ENCODE measurements at regions of chr11 and their contacts with region 1.

Region 1: GRCh38 chr11:7571640-7572000 is 57.8 kb downstream of the PPFIBP2 start:
- DNase-seq: peak; percentile 70
- H3K4me3 ChIP-seq: no peak overlapping the region; a peak in 1 of 4 replicates
- H3K27ac ChIP-seq: no peak overlapping the region; a peak in 1 of 4 replicates
- H3K4me1 ChIP-seq: peaks cover 0 to 23% of the 10 kb centered on the region in 2 experiments; a peak in 1 of 4 replicates
- H3K27me3 ChIP-seq: peaks cover 4% of the 10 kb centered on the region; the same call in 1 of the 2 replicates
- CTCF ChIP-seq: peak; percentile 95
- EP300 ChIP-seq: no peak
- RAD21 ChIP-seq: peak; percentile 96

Region 2: GRCh38 chr11:7435176-7435575 is 136.4 kb before region 1 on chr11:
- CTCF ChIA-PET with region 1: no interaction called
- POLR2A ChIA-PET with region 1: no interaction called
- DNase-seq: no peak
- H3K4me3 ChIP-seq: no peak overlapping the region
- H3K27ac ChIP-seq: no peak overlapping the region
- H3K4me1 ChIP-seq: no peaks in the 10 kb centered on the region
- H3K27me3 ChIP-seq: no peaks in the 10 kb centered on the region
- CTCF ChIP-seq: no peak
- EP300 ChIP-seq: no peak
- RAD21 ChIP-seq: no peak

Region 3: GRCh38 chr11:7520981-7521487 is 50.6 kb before region 1 on chr11:
- CTCF ChIA-PET with region 1: interaction called, 15 read pairs
- POLR2A ChIA-PET with region 1: no interaction called
- DNase-seq: no peak
- H3K4me3 ChIP-seq: no peak overlapping the region
- H3K27ac ChIP-seq: no peak overlapping the region
- H3K4me1 ChIP-seq: no peaks in the 10 kb centered on the region
- H3K27me3 ChIP-seq: peaks cover 5% of the 10 kb centered on the region; the same call in 1 of the 2 replicates
- CTCF ChIP-seq: no peak
- EP300 ChIP-seq: no peak
- RAD21 ChIP-seq: no peak

Region 4: GRCh38 chr11:7548659-7549274 is 22.9 kb before region 1 on chr11:
- CTCF ChIA-PET with region 1: interaction called, 35 read pairs
- POLR2A ChIA-PET with region 1: no interaction called
- DNase-seq: no peak
- H3K4me3 ChIP-seq: no peak overlapping the region
- H3K27ac ChIP-seq: no peak overlapping the region
- H3K4me1 ChIP-seq: peaks cover 0 to 4% of the 10 kb centered on the region in 2 experiments; a peak in 1 of 4 replicates
- H3K27me3 ChIP-seq: no peaks in the 10 kb centered on the region; the same call in 1 of the 2 replicates
- CTCF ChIP-seq: peak; percentile 14; the same call in 1 of the 2 replicates
- EP300 ChIP-seq: no peak
- RAD21 ChIP-seq: no peak

Region 5: GRCh38 chr11:7605186-7605943 is 33.7 kb after region 1 on chr11:
- CTCF ChIA-PET with region 1: interaction called, 14 read pairs
- POLR2A ChIA-PET with region 1: no interaction called
- DNase-seq: no peak
- H3K4me3 ChIP-seq: no peak overlapping the region
- H3K27ac ChIP-seq: no peak overlapping the region
- H3K4me1 ChIP-seq: peaks cover 0 to 1% of the 10 kb centered on the region in 2 experiments; a peak in 1 of 4 replicates
- H3K27me3 ChIP-seq: no peaks in the 10 kb centered on the region
- CTCF ChIP-seq: no peak
- EP300 ChIP-seq: no peak
- RAD21 ChIP-seq: no peak

Region 6: DNA sequence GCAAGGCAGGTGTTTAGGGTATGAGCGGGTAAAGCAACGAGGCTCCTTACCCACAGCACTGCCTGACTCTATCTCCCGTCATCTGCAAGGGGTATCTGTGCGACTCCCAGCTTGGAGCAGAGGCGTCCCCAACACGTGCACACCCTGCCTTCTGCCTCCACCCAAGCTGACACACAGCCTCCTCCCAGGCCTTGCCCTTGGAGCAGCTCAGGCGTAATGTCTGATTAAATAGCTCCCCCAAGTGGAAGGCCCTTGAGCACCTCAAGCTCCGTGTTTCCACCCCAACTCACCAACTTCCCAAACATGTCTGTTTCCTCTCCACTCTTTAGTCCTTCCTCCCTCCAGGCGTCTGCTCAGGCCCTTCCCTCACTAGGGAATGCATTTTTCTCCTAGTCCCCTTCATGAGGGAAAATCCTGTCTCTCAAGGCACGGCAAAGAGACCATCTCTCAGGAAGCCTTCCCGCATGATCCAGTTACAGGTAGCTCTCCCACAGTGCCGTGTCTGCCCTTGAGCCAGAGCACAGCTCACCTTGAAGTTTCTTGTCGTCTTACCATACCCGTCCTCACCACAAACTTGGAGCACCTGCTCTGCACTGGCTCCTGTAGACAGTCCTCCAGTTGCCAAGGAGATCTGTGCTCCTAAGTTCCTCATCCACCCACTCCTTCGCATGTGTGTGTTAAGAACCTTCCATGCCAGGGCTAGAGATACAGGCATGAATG is 85.8 kb after region 1 on chr11:
- CTCF ChIA-PET with region 1: interaction called, 359 read pairs
- POLR2A ChIA-PET with region 1: interaction called, 4 read pairs
- DNase-seq: peak; percentile 68
- H3K4me3 ChIP-seq: no peak overlapping the region
- H3K27ac ChIP-seq: no peak overlapping the region
- H3K4me1 ChIP-seq: peaks cover 0 to 40% of the 10 kb centered on the region in 2 experiments; a peak in 1 of 4 replicates
- H3K27me3 ChIP-seq: no peaks in the 10 kb centered on the region
- CTCF ChIP-seq: peak; percentile 56
- EP300 ChIP-seq: no peak
- RAD21 ChIP-seq: peak; percentile 86

Region 7: GRCh38 chr11:7688238-7688826 is 116.7 kb after region 1 on chr11:
- CTCF ChIA-PET with region 1: interaction called, 71 read pairs
- POLR2A ChIA-PET with region 1: no interaction called
- DNase-seq: peak; percentile 52
- H3K4me3 ChIP-seq: no peak overlapping the region; a peak in 1 of 4 replicates
- H3K27ac ChIP-seq: no peak overlapping the region
- H3K4me1 ChIP-seq: no peaks in the 10 kb centered on the region
- H3K27me3 ChIP-seq: peaks cover 21% of the 10 kb centered on the region; the same call in 1 of the 2 replicates
- CTCF ChIP-seq: peak; percentile 80
- EP300 ChIP-seq: no peak
- RAD21 ChIP-seq: peak; percentile 69

Measured in SK-N-SH (cell line).